PC-9 (cell line): ENCODE measurements at regions of chr13 and their contacts with region 1.

Region 1: DNA sequence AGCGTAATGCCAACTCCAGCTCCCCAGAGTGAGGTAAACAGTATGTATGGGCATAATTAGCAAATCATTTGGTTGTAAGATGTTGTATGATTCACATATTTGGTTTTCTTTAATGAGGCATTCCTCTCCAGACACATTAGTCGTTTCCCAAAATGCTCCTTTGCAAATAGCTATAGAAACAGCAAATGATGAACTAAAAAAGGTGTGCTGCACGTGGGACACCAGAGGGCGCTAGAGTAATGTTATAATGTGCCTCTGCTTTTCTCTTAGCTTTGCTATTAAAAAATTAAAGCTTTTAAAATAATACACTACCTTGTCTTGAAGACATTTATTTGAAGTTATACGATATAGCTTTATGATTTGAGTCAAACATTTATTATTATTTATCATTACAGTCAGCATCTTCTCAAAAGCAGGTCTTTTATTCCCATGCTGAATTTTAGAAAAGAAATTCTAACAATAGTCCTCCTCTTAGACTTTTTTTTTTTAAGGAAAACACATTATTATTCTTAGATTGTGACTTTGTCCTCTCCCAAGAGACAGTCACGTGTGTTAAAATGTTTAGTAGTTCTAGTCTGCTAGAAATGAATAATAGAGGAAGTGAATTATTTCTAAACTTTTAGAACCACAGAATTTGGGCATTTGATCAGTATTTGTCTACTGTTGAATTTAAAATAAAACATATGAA is 121.6 kb upstream of the FRY start:
- DNase-seq: peak; percentile 39 to 45
- H3K4me3 ChIP-seq: no peak overlapping the region
- H3K27ac ChIP-seq: no peak overlapping the region
- H3K4me1 ChIP-seq: peaks cover 27% of the 10 kb centered on the region
- H3K27me3 ChIP-seq: no peaks in the 10 kb centered on the region
- CTCF ChIP-seq: peak; percentile 93

Region 2: DNA sequence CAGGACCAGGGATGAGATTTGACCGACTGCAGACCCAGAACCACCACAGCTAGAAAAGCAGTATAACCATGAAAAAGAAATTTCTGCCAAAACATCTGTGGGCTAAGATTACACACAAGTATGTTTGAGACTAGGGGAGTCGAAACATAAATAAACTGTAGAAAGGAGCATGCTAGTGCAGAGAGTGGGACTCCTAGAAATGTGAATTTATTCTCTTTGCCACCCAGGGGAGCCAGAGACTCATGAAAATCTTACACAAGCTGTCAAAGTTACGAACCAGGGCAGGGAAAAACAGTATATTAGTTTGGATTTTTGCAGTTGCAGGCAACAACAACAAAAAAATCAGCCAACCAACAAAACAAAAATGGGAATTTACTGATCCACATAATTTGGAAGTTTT is 736.0 kb before region 1 on chr13:
- CTCF ChIA-PET with region 1: no interaction called
- POLR2A ChIA-PET with region 1: no interaction called
- intact Hi-C with region 1: no loop called
- DNase-seq: no peak
- H3K4me3 ChIP-seq: no peak overlapping the region
- H3K27ac ChIP-seq: no peak overlapping the region
- H3K4me1 ChIP-seq: peaks cover 25% of the 10 kb centered on the region
- H3K27me3 ChIP-seq: no peaks in the 10 kb centered on the region
- CTCF ChIP-seq: no peak

Region 3: DNA sequence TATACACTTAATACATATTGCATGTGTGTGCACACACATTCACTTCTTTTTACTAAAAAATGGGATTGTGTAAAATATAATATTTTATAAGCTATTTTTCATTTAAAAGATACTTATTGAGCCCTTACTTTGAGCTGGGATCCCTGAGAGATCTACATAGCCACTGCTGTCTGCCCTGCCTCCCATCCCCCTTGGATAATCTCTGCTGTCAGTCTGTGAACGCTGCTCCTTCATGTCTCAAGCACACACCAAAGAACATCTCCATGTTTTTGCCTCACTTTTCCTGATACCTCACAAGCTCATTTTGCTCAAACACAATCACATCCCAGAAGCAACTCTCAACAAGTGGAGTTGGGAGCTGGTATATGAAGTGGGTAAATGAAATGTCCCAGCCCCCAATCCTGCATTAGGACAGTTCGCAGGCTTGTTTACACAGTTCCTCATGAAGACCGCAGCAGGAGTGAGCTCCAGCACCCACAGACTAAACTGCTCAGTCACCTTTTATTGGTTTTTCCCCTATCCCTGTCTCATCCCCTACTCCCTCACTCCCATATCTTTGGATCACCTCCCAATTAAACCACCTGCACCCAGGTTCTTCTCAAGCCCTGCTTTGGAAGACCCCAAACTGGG is 13.2 kb after region 1 on chr13:
- CTCF ChIA-PET with region 1: interaction called, 29 read pairs
- POLR2A ChIA-PET with region 1: interaction called, 14 read pairs
- intact Hi-C with region 1: no loop called
- DNase-seq: no peak
- H3K4me3 ChIP-seq: no peak overlapping the region
- H3K27ac ChIP-seq: no peak overlapping the region
- H3K4me1 ChIP-seq: peaks cover 19% of the 10 kb centered on the region
- H3K27me3 ChIP-seq: no peaks in the 10 kb centered on the region
- CTCF ChIP-seq: no peak

Region 4: GRCh38 chr13:31945202-31945978 is 35.4 kb after region 1 on chr13:
- CTCF ChIA-PET with region 1: interaction called, 4 read pairs
- POLR2A ChIA-PET with region 1: interaction called, 19 read pairs
- intact Hi-C with region 1: no loop called
- DNase-seq: peak; percentile 61 to 97
- H3K4me3 ChIP-seq: peak overlapping the region; percentile 47; the same call in 1 of the 2 replicates
- H3K27ac ChIP-seq: peak overlapping the region; percentile 80
- H3K4me1 ChIP-seq: peaks cover 24% of the 10 kb centered on the region
- H3K27me3 ChIP-seq: no peaks in the 10 kb centered on the region
- CTCF ChIP-seq: no peak

Region 5: GRCh38 chr13:32010136-32010535 is 100.1 kb after region 1 on chr13:
- CTCF ChIA-PET with region 1: interaction called, 10 read pairs
- POLR2A ChIA-PET with region 1: no interaction called
- intact Hi-C with region 1: no loop called
- DNase-seq: no peak
- H3K4me3 ChIP-seq: no peak overlapping the region
- H3K27ac ChIP-seq: no peak overlapping the region
- H3K4me1 ChIP-seq: no peaks in the 10 kb centered on the region
- H3K27me3 ChIP-seq: no peaks in the 10 kb centered on the region
- CTCF ChIP-seq: no peak

Region 6: GRCh38 chr13:32164622-32165268 is 254.7 kb after region 1 on chr13:
- CTCF ChIA-PET with region 1: interaction called, 9 read pairs
- POLR2A ChIA-PET with region 1: no interaction called
- intact Hi-C with region 1: loop called (anchors 10 kb)
- DNase-seq: peak in 1 of 2 experiments; percentile 10
- H3K4me3 ChIP-seq: no peak overlapping the region
- H3K27ac ChIP-seq: no peak overlapping the region
- H3K4me1 ChIP-seq: no peaks in the 10 kb centered on the region
- H3K27me3 ChIP-seq: no peaks in the 10 kb centered on the region
- CTCF ChIP-seq: peak; percentile 58; the same call in 1 of the 2 replicates

Region 7: DNA sequence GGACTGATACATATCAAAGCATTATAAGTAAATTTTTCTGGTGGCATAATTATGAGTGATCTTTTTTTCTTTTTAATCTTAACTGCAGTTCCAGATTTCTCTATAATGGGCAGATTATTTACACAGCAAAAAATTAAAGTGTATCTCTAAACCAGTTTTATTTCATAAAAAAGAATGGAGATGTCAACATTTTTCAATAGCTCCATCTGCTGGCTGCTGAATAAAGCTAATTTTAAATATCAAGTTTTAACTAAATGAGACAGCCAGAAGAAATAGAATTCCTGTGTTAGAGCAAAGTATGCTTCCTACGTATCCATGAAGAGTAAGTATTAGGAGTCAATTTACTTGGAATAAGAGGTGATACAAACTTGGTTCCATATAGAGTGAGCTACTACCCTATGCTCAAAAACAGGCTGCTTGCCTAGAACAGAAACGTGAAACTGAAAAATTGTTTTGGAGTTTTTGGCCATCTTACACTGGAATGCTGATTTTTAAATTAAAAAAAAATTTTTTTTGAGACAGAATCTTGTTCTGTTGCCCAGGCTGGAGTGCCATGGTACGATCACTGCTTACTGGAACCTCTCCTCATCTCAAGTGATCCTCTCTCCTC is 671.3 kb after region 1 on chr13:
- CTCF ChIA-PET with region 1: interaction called, 11 read pairs
- POLR2A ChIA-PET with region 1: no interaction called
- intact Hi-C with region 1: loop called (anchors 2 kb)
- DNase-seq: no peak
- H3K4me3 ChIP-seq: no peak overlapping the region
- H3K27ac ChIP-seq: no peak overlapping the region
- H3K4me1 ChIP-seq: peaks cover 6% of the 10 kb centered on the region; the same call in 1 of the 2 replicates
- H3K27me3 ChIP-seq: no peaks in the 10 kb centered on the region
- CTCF ChIP-seq: peak; percentile 67